ENCODE measurements at regions of chr3 and their contacts with region 1.

Region 1: GRCh38 chr3:156449712-156450574 is 105.0 kb downstream of the SSR3 start:
- DNase-seq: peak; percentile 39
- H3K4me3 ChIP-seq: no peak overlapping the region
- H3K27ac ChIP-seq: no peak overlapping the region
- H3K4me1 ChIP-seq: peaks cover 14% of the 10 kb centered on the region
- H3K27me3 ChIP-seq: no peaks in the 10 kb centered on the region
- CTCF ChIP-seq: peak; percentile 74

Region 2: GRCh38 chr3:156509189-156510174 is 59.5 kb after region 1 on chr3:
- CTCF ChIA-PET with region 1: interaction called, 5 read pairs
- POLR2A ChIA-PET with region 1: no interaction called
- intact Hi-C with region 1: loop called (anchors 1 kb)
- DNase-seq: peak; percentile 77
- H3K4me3 ChIP-seq: no peak overlapping the region
- H3K27ac ChIP-seq: no peak overlapping the region
- H3K4me1 ChIP-seq: peaks cover 6% of the 10 kb centered on the region
- H3K27me3 ChIP-seq: no peaks in the 10 kb centered on the region
- CTCF ChIP-seq: peak; percentile 78

Region 3: DNA sequence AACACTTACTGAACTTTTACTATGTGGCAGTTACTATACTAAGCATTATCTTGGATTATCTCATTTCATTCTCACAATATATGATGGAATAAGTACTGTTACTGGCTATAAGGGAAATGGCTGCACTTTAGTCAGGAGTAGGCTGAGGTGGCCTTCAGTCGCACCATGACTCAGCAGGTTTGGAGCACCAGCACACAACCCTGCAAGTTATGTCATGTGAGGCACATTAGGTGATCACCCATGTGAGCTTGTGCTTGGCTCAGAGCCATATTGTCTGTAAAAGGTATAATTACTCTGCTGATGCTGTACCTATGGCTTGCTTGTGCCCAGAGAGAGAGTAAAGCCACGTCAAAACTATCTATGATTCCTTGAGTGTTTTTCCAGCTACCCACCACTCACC is 170.3 kb after region 1 on chr3:
- CTCF ChIA-PET with region 1: no interaction called
- POLR2A ChIA-PET with region 1: no interaction called
- intact Hi-C with region 1: no loop called
- DNase-seq: no peak
- H3K4me3 ChIP-seq: no peak overlapping the region
- H3K27ac ChIP-seq: peak overlapping the region; percentile 62
- H3K4me1 ChIP-seq: peaks cover 32% of the 10 kb centered on the region
- H3K27me3 ChIP-seq: no peaks in the 10 kb centered on the region
- CTCF ChIP-seq: no peak